GM12878 (cell line): ENCODE measurements at regions of chr2 and their contacts with region 1.

Region 1: GRCh38 chr2:7609974-7610373 is 692.8 kb downstream of the RNF144A start:
- DNase-seq: no peak
- ATAC-seq: peak; percentile 81
- H3K4me3 ChIP-seq: no peak overlapping the region
- H3K27ac ChIP-seq: no peak overlapping the region
- H3K4me1 ChIP-seq: peaks cover 17% of the 10 kb centered on the region
- H3K27me3 ChIP-seq: no peaks in the 10 kb centered on the region
- CTCF ChIP-seq: no peak
- EP300 ChIP-seq: no peak
- POLR2A ChIP-seq: no peak
- RAD21 ChIP-seq: no peak

Region 2: DNA sequence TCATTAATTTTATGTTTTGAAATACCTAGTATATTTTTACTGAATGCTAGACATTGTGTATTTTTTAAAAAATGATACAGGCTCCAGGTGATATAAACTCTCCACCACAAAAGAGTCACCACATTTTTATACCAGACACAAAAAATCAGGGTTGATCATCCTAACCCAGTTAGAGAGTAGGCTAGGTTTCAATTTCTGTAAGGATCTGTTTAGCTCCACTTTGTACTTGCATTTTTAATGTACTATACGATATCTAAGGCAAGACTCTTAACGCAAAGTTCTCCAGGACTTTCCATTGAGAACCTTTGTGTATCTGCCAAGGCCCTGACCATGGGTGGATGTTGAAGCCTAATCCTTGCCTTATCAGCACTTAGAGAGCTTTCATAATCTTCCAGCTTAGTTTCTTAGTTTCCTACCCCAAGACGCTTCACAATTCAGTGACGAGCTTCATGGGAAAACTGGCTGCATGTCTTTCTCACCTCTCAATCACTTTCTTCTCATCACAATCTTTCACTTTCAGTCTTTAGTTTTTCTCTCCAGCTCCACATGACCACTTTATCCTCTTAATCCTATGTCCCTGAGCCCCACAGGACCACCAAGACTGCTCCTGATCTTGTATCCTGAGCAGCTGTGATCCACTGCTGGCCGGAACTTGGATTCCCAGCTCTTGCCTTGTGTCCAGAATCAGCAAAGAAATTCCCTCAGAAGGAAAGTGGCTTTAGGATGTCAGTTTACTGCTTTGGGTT is 57.0 kb before region 1 on chr2:
- CTCF ChIA-PET with region 1: no interaction called
- POLR2A ChIA-PET with region 1: no interaction called
- RAD21 ChIA-PET with region 1: no interaction called
- SMC1A ChIA-PET with region 1: no interaction called
- in situ Hi-C with region 1: no loop called
- intact Hi-C with region 1: no loop called
- DNase-seq: no peak
- ATAC-seq: no peak
- H3K4me3 ChIP-seq: no peak overlapping the region
- H3K27ac ChIP-seq: no peak overlapping the region
- H3K4me1 ChIP-seq: no peaks in the 10 kb centered on the region
- H3K27me3 ChIP-seq: no peaks in the 10 kb centered on the region
- CTCF ChIP-seq: no peak
- EP300 ChIP-seq: no peak
- POLR2A ChIP-seq: no peak
- RAD21 ChIP-seq: no peak

Region 3: DNA sequence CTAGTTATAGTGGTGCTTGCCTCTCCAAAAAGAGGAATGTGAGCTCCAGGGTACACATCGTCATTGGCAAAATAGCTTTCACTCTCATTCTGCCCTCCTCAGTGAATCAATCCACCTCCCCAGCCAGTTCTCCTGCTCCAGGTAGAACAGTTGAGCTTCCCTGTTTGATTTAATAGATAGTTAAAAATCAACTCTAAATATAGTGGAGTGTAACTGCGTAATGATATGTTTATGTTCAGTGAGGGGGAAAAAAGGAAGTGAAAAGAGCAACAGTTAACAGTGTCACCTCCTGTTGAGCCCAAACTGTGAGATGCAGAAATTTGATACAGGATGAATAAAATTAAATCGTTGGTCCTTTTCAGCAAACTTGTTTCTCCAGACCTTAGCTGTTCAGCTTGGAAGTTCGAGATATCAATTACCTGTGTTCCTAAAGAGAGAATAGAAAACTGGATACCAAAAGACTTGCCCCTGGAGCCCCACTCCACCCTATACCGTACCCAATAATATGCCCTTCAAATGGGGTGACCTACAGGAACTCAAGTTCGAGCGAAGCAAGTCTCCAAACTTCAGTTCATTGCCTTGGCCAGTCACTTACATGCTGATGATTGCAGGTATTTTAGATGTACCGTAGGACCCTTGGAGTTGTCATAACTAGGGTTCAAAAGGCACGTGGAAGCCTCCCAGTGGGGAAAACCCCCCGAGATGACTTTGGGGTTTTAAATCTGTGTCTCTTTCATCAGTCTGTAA is 15.6 kb after region 1 on chr2:
- CTCF ChIA-PET with region 1: interaction called, 5 read pairs
- POLR2A ChIA-PET with region 1: no interaction called
- RAD21 ChIA-PET with region 1: interaction called, 5 read pairs
- SMC1A ChIA-PET with region 1: interaction called, 31 read pairs
- in situ Hi-C with region 1: no loop called
- intact Hi-C with region 1: no loop called
- DNase-seq: peak; percentile 19
- ATAC-seq: peak; percentile 89
- H3K4me3 ChIP-seq: no peak overlapping the region; the same call in 1 of the 2 replicates
- H3K27ac ChIP-seq: peak overlapping the region; percentile 18; the same call in 1 of the 2 replicates
- H3K4me1 ChIP-seq: peaks cover 13% of the 10 kb centered on the region
- H3K27me3 ChIP-seq: no peaks in the 10 kb centered on the region; a peak in 1 of 4 replicates
- CTCF ChIP-seq: no peak
- EP300 ChIP-seq: peak in 1 of 2 experiments; percentile 80; a peak in 2 of 4 replicates
- POLR2A ChIP-seq: no peak
- RAD21 ChIP-seq: no peak